BJ (cell line): ENCODE measurements at regions of chr19 and their contacts with region 1.

Region 1: DNA sequence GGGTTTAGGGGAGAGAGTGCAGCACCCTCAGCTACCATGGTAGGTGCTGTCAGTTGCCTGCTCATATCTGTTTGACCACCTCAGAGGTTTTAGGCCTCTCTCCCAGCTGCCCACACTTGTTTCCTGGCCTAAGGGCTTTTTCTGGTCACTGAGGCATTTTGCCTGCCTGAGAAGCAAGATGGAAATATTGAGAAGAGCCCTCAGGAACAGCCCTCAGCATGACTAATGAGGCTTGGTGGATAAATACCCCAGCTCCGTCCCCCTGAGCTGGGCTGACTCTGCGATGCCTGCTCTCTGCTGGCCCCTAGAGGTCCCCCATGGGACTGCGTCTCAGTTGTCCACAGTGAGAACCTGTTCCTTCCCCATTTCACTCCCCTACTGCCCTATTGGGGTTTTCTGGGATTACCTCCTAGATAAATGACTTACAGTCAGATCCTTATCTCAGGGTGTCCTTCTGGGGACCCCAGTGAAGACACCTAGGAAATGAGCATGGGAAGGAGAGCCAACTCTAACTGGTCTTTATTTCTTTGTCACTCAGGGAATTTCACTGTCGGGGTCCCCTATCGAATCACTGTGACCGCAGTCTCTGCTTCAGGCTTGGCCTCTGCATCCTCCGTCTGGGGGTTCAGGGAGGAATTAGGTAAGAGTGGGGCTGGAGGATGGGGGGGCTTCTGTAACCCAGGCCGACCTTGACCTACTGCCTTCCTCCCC is 13.3 kb downstream of the PALM3 start:
- DNase-seq: no peak
- H3K4me3 ChIP-seq: no peak overlapping the region
- H3K27me3 ChIP-seq: no peaks in the 10 kb centered on the region
- CTCF ChIP-seq: peak; percentile 89

Region 2: GRCh38 chr19:13880059-13881043 is 168.2 kb before region 1 on chr19:
- CTCF ChIA-PET with region 1: interaction called, 14 read pairs
- POLR2A ChIA-PET with region 1: no interaction called
- DNase-seq: peak; percentile 73
- H3K4me3 ChIP-seq: no peak overlapping the region
- H3K27me3 ChIP-seq: no peaks in the 10 kb centered on the region
- CTCF ChIP-seq: peak; percentile 99

Region 3: GRCh38 chr19:14031719-14032480 is 16.7 kb before region 1 on chr19 and contains the start of gene IL27RA:
- CTCF ChIA-PET with region 1: interaction called, 14 read pairs
- POLR2A ChIA-PET with region 1: no interaction called
- DNase-seq: no peak
- H3K4me3 ChIP-seq: peak within 1 kb of the TSS; percentile 61
- H3K27me3 ChIP-seq: peaks cover 6% of the 10 kb centered on the region
- CTCF ChIP-seq: peak; percentile 87
- polyA plus RNA-seq, gene IL27RA: 4.4 and 6.6 TPM in 2 replicates